Activated CD8-positive, alpha-beta T cell treated with anti-CD3 and anti-CD28 coated beads, Interleukin-2, amount 10 ng/mL, durations not matched to agents 7 days and 5 days (primary cell): ENCODE measurements at regions of chr17 and their contacts with region 1.

Region 1: DNA sequence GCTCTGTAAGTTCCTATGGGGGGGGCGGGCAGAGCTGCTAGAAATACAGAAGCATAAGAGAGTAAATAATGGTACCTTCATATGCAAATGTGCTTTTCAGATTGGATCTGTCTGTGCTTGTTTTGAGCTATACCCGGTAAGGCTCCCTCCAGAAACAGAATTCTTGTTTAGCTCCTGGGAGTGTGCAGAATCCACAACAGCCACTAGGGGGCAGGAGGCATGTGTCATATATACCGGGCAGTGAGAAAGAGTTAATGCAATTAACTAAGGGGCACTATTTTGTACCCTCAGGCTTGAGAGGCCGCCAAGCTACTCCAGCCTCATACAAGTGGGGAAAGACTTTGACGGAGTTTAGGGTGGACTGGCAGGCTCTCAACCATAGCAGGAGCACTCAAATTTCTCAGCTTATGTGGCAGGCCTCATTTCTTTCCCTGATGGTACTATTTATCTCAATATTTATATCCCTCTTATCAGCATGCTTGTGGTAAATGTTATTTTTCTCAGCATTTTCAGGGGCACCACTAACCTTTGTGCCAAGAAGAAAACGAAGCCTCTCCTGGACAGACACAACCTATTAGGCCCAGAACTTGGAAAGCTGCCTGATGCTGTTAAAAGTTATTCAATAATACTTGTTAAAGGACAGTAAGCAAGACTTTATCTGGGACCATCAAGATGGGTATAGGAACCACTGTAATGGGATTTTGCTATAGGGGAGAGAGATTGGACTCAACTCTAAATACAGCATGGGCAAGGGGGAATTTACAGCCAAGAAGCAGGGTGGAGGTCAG is 10.7 kb upstream of the CENPV start:
- DNase-seq: peak; percentile 87
- ATAC-seq: peak; percentile 96
- H3K4me3 Mint-ChIP-seq: no peak overlapping the region
- H3K27ac Mint-ChIP-seq: no peak overlapping the region
- H3K4me1 Mint-ChIP-seq: peaks cover 3% of the 10 kb centered on the region
- H3K27me3 Mint-ChIP-seq: peaks cover 5% of the 10 kb centered on the region

Region 2: GRCh38 chr17:16304830-16305229 is 59.1 kb before region 1 on chr17:
- CTCF ChIA-PET with region 1: interaction called, 16 read pairs
- POLR2A ChIA-PET with region 1: no interaction called
- DNase-seq: peak; percentile 37
- ATAC-seq: no peak
- H3K4me3 Mint-ChIP-seq: no peak overlapping the region
- H3K27ac Mint-ChIP-seq: no peak overlapping the region
- H3K4me1 Mint-ChIP-seq: no peaks in the 10 kb centered on the region
- H3K27me3 Mint-ChIP-seq: no peaks in the 10 kb centered on the region

Region 3: GRCh38 chr17:16380640-16381495 is 16.9 kb after region 1 on chr17 and contains the start of gene UBB:
- CTCF ChIA-PET with region 1: interaction called, 33 read pairs
- POLR2A ChIA-PET with region 1: interaction called, 22 read pairs
- DNase-seq: peak; percentile 97
- ATAC-seq: peak; percentile 92
- H3K4me3 Mint-ChIP-seq: peak within 1 kb of the TSS; percentile 97
- H3K27ac Mint-ChIP-seq: peak within 1 kb of the TSS; percentile 96
- H3K4me1 Mint-ChIP-seq: peaks cover 38% of the 10 kb centered on the region
- H3K27me3 Mint-ChIP-seq: no peaks in the 10 kb centered on the region
- total RNA-seq, gene UBB: 1,415 to 1,441 TPM

Region 4: GRCh38 chr17:16438557-16439302 is 74.8 kb after region 1 on chr17:
- CTCF ChIA-PET with region 1: interaction called, 20 read pairs
- POLR2A ChIA-PET with region 1: no interaction called
- DNase-seq: peak; percentile 97
- ATAC-seq: peak; percentile 90
- H3K4me3 Mint-ChIP-seq: peak overlapping the region; percentile 100
- H3K27ac Mint-ChIP-seq: peak overlapping the region; percentile 99
- H3K4me1 Mint-ChIP-seq: peaks cover 49% of the 10 kb centered on the region
- H3K27me3 Mint-ChIP-seq: no peaks in the 10 kb centered on the region

Region 5: DNA sequence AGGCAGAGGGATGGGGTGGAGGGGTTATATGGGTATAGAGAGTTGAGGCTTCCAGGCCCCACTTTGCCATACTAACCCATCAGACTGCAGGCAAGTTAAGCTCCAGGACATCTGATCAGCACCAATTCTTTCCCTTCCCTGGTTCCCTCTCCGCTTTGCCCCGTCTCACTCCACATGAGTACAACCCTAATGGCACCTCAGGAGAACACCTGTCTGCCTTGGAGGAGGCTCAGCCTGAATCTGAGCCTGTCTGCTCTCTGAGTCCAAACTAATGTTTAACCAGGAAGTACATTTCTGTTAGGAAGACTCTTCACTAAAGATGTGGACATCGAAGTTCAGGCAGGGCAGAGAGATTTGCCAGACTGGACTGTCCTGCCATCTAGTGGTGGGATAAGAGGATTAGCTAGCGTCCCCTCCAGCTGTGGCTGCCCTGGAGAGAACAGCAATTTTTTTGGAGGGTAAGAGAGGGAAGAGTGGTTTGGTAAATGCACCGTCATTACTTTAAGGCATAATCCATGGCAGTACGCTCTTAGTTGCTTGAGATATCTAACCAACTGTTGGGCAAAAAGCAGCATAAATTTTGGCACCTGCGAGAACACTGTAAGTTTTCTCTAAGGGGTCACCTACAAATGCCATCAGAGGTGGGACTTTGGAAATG is 157.3 kb after region 1 on chr17:
- CTCF ChIA-PET with region 1: interaction called, 52 read pairs
- POLR2A ChIA-PET with region 1: no interaction called
- DNase-seq: peak; percentile 81
- ATAC-seq: peak; percentile 98
- H3K4me3 Mint-ChIP-seq: no peak overlapping the region
- H3K27ac Mint-ChIP-seq: peak overlapping the region; percentile 56
- H3K4me1 Mint-ChIP-seq: peaks cover 3% of the 10 kb centered on the region
- H3K27me3 Mint-ChIP-seq: peaks cover 22% of the 10 kb centered on the region